GM12878 (cell line): ENCODE measurements at regions of chr11 and their contacts with region 1.

Region 1: GRCh38 chr11:47725445-47726442 is 10.6 kb upstream of the AGBL2 start:
- DNase-seq: no peak
- ATAC-seq: no peak
- H3K4me3 ChIP-seq: no peak overlapping the region
- H3K27ac ChIP-seq: no peak overlapping the region
- H3K4me1 ChIP-seq: no peaks in the 10 kb centered on the region
- H3K27me3 ChIP-seq: no peaks in the 10 kb centered on the region
- CTCF ChIP-seq: no peak
- EP300 ChIP-seq: no peak
- POLR2A ChIP-seq: no peak
- RAD21 ChIP-seq: no peak

Region 2: DNA sequence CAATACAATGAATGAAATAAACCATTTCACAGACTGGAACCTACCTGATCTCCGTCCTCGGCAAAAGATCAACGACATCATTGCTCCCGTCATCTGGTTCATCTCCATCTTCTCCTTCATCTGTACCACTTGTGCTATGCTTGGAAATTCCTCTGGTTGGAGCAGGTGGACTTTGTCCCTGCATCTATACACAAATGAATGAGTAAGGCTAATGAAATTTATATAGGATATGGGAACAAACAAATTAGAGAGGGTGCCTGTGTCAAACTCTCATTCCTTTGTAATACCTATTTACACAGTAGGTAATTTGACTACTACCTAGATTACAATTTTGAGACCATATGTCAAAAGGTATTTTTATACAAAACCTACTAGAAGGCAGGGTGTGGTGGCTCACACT is 947.3 kb before region 1 on chr11:
- CTCF ChIA-PET with region 1: no interaction called
- POLR2A ChIA-PET with region 1: no interaction called
- RAD21 ChIA-PET with region 1: no interaction called
- SMC1A ChIA-PET with region 1: no interaction called
- in situ Hi-C with region 1: loop called (anchors 25 kb)
- intact Hi-C with region 1: no loop called
- DNase-seq: no peak
- ATAC-seq: no peak
- H3K4me3 ChIP-seq: no peak overlapping the region
- H3K27ac ChIP-seq: no peak overlapping the region
- H3K4me1 ChIP-seq: no peaks in the 10 kb centered on the region
- H3K27me3 ChIP-seq: no peaks in the 10 kb centered on the region
- CTCF ChIP-seq: no peak
- EP300 ChIP-seq: no peak
- POLR2A ChIP-seq: no peak
- RAD21 ChIP-seq: no peak

Region 3: DNA sequence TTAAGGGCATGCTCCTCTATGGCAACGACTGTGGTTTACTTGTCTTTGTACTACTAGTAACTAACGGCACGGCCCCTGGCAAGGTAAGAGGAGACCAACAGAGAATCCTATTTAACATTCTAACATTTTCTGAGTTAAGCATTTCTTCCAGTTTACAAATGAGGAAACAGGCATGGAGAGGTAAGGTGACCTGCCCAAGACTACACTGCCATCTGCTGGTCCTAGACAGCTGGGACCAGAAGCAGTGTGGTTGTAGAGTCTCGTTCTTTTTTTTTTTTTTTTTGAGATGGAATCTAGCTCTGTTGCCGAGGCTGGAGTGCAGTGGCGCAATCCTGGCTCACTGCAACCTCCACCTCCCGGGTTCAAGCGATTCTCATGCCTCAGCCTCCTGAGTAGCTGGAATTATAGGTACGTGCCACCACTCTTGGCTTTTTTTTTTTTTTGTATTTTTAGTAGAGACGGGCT is 271.5 kb before region 1 on chr11:
- CTCF ChIA-PET with region 1: no interaction called
- POLR2A ChIA-PET with region 1: no interaction called
- RAD21 ChIA-PET with region 1: no interaction called
- SMC1A ChIA-PET with region 1: no interaction called
- in situ Hi-C with region 1: no loop called
- intact Hi-C with region 1: no loop called
- DNase-seq: peak; percentile 37
- ATAC-seq: peak; percentile 97
- H3K4me3 ChIP-seq: no peak overlapping the region
- H3K27ac ChIP-seq: no peak overlapping the region
- H3K4me1 ChIP-seq: no peaks in the 10 kb centered on the region
- H3K27me3 ChIP-seq: no peaks in the 10 kb centered on the region
- CTCF ChIP-seq: peak; percentile 80 to 87 (median 83)
- EP300 ChIP-seq: no peak
- POLR2A ChIP-seq: no peak
- RAD21 ChIP-seq: peak; percentile 81